CD8-positive, alpha-beta T cell (primary cell): ENCODE measurements at regions of chr11 and their contacts with region 1.

Region 1: DNA sequence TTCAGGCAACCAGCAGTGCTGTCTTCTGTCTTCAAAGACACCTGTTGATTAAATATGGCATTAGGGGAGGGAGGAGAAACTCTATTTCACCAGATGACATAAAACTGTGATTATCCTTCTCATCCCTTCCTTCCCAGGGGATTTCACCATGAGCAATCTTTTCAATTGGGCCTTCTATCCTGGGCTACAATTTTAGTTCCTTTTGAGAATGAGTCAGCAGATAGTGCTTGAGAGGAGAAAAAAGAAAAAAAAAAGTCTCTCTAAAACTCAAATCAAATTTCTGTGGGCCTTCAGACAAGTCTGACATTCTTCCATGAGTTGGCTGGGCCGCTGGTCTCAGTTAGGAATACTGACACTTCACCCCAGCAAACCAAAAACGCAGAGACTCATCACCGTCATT is 7.2 kb downstream of the FLI1 start:
- DNase-seq: no peak
- ATAC-seq: no peak
- H3K4me3 ChIP-seq: no peak overlapping the region
- H3K4me3 Mint-ChIP-seq: no peak overlapping the region
- H3K27ac ChIP-seq: no peak overlapping the region
- H3K27ac Mint-ChIP-seq: peak overlapping the region; percentile 37
- H3K4me1 ChIP-seq: peaks cover 91% of the 10 kb centered on the region
- H3K4me1 Mint-ChIP-seq: peaks cover 94% of the 10 kb centered on the region
- H3K27me3 ChIP-seq: no peaks in the 10 kb centered on the region
- H3K27me3 Mint-ChIP-seq: no peaks in the 10 kb centered on the region
- CTCF ChIP-seq: no peak

Region 2: GRCh38 chr11:128463371-128463829 is 237.7 kb before region 1 on chr11:
- CTCF ChIA-PET with region 1: no interaction called
- POLR2A ChIA-PET with region 1: interaction called, 3 read pairs
- intact Hi-C with region 1: loop called in 1 of 2 experiments (anchors 5 kb)
- DNase-seq: peak in 1 of 9 experiments; percentile 19
- ATAC-seq: no peak
- H3K4me3 ChIP-seq: no peak overlapping the region
- H3K4me3 Mint-ChIP-seq: peak overlapping the region; percentile 70
- H3K27ac ChIP-seq: peak overlapping the region; percentile 68 to 88
- H3K27ac Mint-ChIP-seq: peak overlapping the region; percentile 94
- H3K4me1 ChIP-seq: peaks cover 89% of the 10 kb centered on the region
- H3K4me1 Mint-ChIP-seq: peaks cover 97% of the 10 kb centered on the region
- H3K27me3 ChIP-seq: no peaks in the 10 kb centered on the region
- H3K27me3 Mint-ChIP-seq: no peaks in the 10 kb centered on the region
- CTCF ChIP-seq: no peak

Region 3: DNA sequence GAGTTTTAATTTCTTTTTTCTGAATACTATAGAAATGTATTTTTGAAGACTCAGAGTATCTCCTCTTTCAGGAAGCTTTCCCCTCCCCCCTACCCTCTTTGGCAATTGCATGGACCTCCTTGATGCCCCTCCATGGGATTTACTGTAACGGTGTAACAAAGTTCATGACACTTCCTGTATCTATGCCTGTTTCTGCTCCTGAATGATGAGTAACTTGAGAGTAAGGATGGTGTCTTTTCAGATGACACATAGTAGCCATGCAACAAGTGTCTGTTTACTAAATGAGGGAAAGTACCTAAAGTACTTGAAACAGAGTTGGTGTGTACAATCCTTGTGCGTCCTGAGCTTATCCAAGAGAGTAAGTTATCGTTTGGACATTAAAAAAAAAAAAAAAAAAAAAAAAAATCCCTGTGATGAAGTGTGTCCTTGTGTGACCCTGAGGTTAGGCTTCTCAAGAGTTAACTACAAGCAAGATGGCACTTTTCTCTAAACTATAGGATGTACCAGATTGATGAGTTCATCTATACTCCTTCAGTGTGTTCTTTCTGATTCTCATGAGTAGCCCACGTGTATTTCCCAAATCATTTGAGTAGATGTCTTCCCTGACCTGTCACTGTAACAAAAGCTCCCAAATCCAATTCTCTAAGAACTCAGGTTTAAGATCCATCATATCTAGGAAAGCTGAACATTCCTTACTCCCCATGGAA is 121.1 kb before region 1 on chr11:
- CTCF ChIA-PET with region 1: no interaction called
- POLR2A ChIA-PET with region 1: no interaction called
- intact Hi-C with region 1: no loop called
- DNase-seq: peak in 2 of 9 experiments; percentile 13 to 37
- ATAC-seq: peak; percentile 69
- H3K4me3 ChIP-seq: no peak overlapping the region
- H3K4me3 Mint-ChIP-seq: no peak overlapping the region
- H3K27ac ChIP-seq: no peak overlapping the region
- H3K27ac Mint-ChIP-seq: no peak overlapping the region
- H3K4me1 ChIP-seq: peaks cover 33% of the 10 kb centered on the region
- H3K4me1 Mint-ChIP-seq: peaks cover 62% of the 10 kb centered on the region
- H3K27me3 ChIP-seq: no peaks in the 10 kb centered on the region
- H3K27me3 Mint-ChIP-seq: no peaks in the 10 kb centered on the region
- CTCF ChIP-seq: no peak

Region 4: DNA sequence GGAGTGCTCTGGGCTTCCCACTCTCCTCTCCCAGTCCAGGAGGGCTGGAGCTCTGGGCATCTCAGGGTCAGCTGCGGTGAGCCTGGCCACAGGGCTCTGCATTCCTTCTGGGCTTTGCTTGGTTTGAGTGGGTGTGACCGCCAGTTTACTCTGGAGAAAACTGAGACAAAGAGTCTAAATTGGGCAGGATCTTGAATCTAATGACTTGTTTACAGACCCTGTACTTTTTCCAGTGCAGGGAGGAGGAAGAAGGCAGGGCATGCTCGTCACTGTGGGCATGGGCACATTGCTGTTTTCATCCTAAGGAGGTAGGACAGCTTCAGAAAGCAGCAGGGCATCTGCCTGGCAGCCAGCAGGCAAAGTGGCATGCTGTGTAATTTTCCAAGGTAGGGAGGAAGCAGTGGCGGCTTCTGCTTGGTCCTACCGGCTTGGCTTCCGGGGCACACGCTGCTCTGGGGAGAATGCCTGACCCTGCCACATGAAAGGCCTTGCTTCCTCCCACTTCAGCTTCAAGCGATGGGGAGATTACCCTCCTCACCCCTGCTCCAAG is 15.7 kb after region 1 on chr11:
- CTCF ChIA-PET with region 1: interaction called, 5 read pairs
- POLR2A ChIA-PET with region 1: interaction called, 12 read pairs
- intact Hi-C with region 1: loop called (anchors 1 kb)
- DNase-seq: peak in 6 of 9 experiments; percentile 55 to 85 (median 70)
- ATAC-seq: peak; percentile 64
- H3K4me3 ChIP-seq: peak overlapping the region; percentile 9 to 14
- H3K4me3 Mint-ChIP-seq: peak overlapping the region; percentile 80
- H3K27ac ChIP-seq: peak overlapping the region; percentile 50 to 81
- H3K27ac Mint-ChIP-seq: peak overlapping the region; percentile 99
- H3K4me1 ChIP-seq: peaks cover 97% of the 10 kb centered on the region
- H3K4me1 Mint-ChIP-seq: peaks cover 99% of the 10 kb centered on the region
- H3K27me3 ChIP-seq: no peaks in the 10 kb centered on the region
- H3K27me3 Mint-ChIP-seq: no peaks in the 10 kb centered on the region
- CTCF ChIP-seq: no peak

Region 5: DNA sequence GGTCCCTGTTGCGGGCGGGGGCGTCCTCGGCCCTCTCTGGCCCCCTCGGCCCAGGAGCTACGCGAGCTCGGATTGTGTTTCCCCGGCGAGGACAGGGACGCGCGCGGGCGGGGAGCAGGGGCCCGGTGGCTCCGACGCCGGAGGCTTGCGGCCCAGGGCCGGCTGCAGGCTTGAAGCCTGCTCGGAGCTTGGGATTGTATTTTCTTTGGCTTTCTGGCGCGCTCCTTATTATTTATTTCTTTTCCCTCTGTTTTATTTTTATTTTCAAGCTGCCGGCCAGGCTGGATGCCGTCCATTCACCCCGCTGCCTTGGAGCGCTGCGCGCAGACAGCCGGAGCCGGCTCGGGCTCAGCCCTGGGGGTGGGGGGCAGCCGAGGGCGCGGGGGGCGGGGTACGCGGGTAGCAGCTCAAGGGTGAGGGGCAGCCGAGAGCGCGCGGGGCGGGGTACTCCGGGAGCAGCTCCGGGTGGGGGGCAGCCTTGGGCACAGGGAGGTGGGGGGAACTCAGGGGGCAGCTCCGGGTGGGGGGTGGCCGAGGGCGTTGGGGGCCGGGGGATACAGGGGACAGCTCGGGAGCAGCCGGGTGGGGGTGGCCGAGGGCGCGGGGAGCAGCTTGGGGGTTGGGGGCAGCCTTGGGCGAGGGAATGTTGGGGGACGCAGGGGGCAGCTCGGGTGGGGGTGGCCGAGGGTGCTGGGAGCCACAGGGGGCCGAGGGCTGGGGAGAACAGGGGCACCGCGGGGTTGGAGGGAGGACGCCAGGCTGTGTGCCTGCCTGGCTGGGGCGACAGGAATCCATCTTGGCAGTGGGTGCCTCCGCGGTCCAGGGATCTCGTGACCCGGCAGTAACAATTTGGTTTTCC is 123.3 kb after region 1 on chr11:
- CTCF ChIA-PET with region 1: no interaction called
- POLR2A ChIA-PET with region 1: no interaction called
- intact Hi-C with region 1: no loop called
- DNase-seq: peak in 1 of 9 experiments; percentile 44
- ATAC-seq: no peak
- H3K4me3 ChIP-seq: no peak overlapping the region
- H3K4me3 Mint-ChIP-seq: no peak overlapping the region
- H3K27ac ChIP-seq: no peak overlapping the region
- H3K27ac Mint-ChIP-seq: no peak overlapping the region
- H3K4me1 ChIP-seq: no peaks in the 10 kb centered on the region
- H3K4me1 Mint-ChIP-seq: no peaks in the 10 kb centered on the region
- H3K27me3 ChIP-seq: no peaks in the 10 kb centered on the region
- H3K27me3 Mint-ChIP-seq: no peaks in the 10 kb centered on the region
- CTCF ChIP-seq: no peak